AG04450 (cell line): ENCODE measurements at regions of chr19 and their contacts with region 1.

Region 1: DNA sequence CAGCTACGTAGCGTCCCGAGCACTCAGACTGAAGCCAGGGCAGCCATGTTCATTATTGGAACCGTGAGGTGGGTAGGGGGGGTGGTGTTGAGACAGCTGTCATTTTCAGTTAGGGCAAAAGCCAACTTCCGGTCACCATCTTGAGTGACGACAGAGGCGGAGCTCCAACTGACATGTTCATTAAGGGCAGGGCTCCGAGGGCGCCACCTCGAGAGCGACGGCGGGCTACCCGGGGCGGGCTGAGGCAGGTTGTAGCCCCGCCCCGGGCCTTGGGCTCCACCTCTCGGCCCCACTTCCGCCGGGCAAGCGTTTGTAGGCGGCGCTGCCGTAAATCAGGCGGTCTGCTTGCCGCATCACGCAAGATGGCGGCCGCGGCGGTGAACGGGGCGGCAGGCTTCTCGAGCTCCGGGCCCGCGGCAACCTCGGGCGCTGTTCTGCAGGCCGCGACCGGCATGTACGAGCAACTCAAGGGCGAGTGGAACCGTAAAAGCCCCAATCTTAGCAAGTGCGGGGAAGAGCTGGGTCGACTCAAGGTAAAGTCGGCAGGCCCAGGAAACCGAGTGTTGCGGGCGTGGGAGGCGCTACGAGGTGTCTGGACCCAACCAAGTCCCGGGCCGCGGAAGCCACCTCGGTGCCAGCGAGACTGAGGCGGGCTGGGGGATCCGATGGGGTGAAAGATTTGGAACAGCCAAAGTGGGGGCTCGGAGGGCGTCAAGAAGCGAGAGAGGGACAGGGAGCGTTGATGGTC is at the start of gene PSMD8:
- DNase-seq: peak; percentile 95
- H3K4me3 ChIP-seq: peak within 1 kb of the TSS; percentile 92
- H3K27ac ChIP-seq: peak within 1 kb of the TSS; percentile 87
- H3K27me3 ChIP-seq: peaks cover 5% of the 10 kb centered on the region
- CTCF ChIP-seq: no peak; the same call in 1 of the 2 replicates
- polyA plus RNA-seq, gene PSMD8: 287 and 328 TPM in 2 replicates

Region 2: GRCh38 chr19:38321646-38322196 is 52.9 kb before region 1 on chr19:
- CTCF ChIA-PET with region 1: no interaction called
- POLR2A ChIA-PET with region 1: no interaction called
- DNase-seq: no peak
- H3K4me3 ChIP-seq: no peak overlapping the region
- H3K27ac ChIP-seq: no peak overlapping the region
- H3K27me3 ChIP-seq: no peaks in the 10 kb centered on the region
- CTCF ChIP-seq: no peak

Region 3: DNA sequence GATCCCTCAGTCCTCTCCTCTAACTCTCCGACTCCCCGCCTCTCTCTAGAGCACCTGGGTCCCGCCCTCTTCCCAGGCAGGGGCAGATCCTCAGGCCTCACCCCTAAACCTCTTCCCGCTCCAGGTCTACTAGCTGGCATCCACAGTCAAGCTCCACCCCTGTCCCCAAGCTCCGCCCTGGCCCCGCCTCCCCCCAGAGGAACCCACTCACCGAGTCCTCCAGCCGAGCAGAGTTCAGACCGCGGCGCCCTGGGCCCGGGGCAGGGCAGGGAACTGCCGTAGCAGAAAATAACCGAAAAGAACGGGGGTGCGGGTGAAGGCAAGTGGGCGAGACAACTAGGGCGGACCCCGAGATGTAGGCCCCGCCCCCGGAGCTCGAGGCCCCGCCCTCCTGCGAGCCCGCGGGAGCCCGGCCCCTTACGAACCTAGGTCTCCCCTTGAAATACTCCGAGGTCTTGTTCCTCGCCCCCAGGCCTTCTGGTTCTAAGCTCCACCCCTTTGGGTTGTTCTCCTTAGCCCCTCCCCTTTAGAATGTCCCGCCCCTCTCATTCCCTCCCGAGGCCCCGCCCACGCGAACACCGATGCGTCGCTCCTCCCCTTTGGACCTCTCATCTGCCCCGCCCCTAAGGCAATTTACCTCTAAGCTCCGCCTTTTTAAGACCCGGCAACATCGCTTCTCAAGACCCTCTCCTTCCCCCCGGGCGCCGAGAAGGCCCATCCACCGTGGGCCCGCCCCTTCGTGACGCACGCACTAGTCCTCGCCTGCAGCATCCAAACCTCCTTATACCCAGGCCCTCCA is 13.1 kb after region 1 on chr19 and contains the start of gene GGN:
- CTCF ChIA-PET with region 1: interaction called, 10 read pairs
- POLR2A ChIA-PET with region 1: interaction called, 49 read pairs
- DNase-seq: peak; percentile 87
- H3K4me3 ChIP-seq: peak within 1 kb of the TSS; percentile 93
- H3K27ac ChIP-seq: peak within 1 kb of the TSS; percentile 77
- H3K27me3 ChIP-seq: no peaks in the 10 kb centered on the region
- CTCF ChIP-seq: no peak
- polyA plus RNA-seq, gene GGN: 0.15 and 0.27 TPM in 2 replicates